RWPE1 (cell line): ENCODE measurements at regions of chr14 and their contacts with region 1.

Region 1: DNA sequence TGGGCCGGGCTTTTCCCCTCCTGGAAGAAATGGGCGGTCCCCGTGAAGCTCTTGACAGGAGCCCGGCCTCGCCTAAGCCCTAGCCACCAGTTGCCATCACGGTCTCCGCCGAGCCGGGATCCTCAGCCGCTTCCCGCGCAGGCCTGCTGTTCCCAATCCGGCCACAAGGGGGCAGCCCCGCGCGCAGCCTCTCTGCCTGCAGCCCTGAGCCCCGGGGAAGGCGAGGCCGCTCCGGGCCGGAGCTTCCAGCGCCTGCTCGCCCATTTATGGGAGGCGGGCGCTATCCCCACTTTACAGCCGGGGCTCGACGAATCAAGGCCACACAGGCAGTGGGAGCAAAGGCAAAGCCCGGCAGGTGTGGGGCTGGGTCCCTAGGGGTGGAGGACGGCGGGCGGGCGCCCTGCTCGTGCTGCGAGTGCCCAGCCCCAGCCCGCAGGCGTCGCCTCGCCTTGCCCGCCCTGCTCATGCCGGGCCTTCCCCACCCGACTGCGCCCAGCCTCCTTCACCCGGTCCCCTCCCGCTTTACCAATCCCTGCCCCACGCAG is 61.5 kb downstream of the LGMN start:
- DNase-seq: peak; percentile 84
- H3K27ac ChIP-seq: no peak overlapping the region
- CTCF ChIP-seq: peak; percentile 97

Region 2: GRCh38 chr14:92317511-92317910 is 369.5 kb before region 1 on chr14:
- CTCF ChIA-PET with region 1: no interaction called
- POLR2A ChIA-PET with region 1: no interaction called
- DNase-seq: no peak
- H3K27ac ChIP-seq: no peak overlapping the region
- CTCF ChIP-seq: no peak

Region 3: DNA sequence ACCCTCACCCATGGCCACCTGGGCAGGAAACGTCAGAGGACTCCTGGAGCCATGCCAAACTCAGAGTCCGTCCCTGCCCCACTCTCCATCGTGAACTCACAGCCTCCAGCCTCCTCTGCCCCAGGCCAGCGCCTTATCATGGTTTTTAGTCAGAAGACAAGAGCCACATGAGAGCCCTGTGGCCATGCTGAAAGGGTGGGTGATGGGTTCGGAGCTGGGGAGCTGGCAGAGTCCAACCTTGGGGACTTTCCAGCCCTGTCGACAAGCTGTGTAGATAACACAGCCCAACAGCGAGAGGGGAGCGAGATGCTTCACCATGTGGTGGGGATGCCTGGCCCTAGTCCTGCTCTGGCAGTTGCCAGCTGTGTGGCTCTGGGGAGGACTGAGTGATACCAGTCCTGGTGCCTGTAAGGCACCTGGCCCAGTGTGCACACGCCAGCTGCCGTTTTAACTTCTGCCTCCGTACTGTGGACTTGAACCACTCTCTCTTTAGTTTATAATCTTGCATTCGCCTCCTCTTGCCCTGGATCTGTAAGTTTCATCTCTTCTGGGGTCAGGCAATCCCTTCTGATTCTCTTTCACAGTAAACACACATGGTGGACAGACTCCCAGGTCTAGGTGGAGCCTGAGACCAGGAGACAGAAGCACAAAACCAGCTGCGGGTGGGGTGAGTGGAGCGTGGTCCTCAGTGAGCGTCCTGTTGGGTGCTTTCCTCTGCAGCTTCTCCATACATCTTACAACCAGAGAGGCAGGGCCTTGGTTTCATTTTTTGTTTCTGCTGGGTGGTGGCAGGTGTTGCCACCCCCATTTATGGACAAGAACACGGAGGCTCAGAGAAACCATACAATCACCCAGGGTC is 118.1 kb before region 1 on chr14:
- CTCF ChIA-PET with region 1: no interaction called
- POLR2A ChIA-PET with region 1: no interaction called
- DNase-seq: no peak
- H3K27ac ChIP-seq: no peak overlapping the region
- CTCF ChIP-seq: no peak

Region 4: DNA sequence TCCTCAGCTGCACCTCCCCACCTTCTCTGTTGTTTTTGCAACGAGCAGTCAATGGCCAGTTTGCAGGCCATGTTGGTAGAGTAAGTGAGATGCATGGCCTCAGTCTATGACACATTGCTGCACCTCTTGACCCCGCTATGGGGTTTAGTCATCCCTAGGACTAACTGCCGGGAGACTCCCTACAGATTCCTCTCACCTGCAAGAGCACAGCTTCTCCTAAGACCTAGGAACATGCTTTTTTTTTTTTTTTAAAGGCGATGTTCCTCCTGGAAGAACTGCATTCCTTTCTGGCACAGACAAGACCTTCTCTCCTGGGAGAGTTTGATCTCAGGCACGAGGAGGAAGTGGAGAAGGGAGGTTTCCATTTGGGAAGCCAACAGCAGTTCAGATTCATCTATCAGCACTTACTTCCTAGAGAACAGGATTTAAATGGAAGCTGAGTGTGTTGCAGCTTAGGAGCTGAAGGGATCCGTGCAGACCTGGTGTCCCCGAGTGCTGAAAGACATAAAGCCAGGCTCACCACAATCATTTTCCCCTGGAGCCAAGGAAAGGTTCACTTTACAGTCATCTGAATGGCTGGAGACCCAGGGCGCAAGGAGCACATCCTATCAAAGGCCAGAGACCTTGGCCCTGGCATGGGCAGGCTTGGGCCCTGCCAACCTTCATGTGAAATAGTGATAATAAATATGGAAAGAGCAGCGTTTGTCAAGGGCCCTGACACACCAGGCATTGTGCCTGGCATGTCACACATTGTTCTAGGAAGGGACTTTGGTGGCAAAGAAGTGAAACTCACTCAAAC is 42.6 kb before region 1 on chr14:
- CTCF ChIA-PET with region 1: interaction called, 10 read pairs
- POLR2A ChIA-PET with region 1: no interaction called
- DNase-seq: peak; percentile 94
- H3K27ac ChIP-seq: peak overlapping the region; percentile 38; the same call in 1 of the 2 replicates
- CTCF ChIP-seq: no peak

Region 5: GRCh38 chr14:92785667-92786426 is 98.9 kb after region 1 on chr14:
- CTCF ChIA-PET with region 1: interaction called, 10 read pairs
- POLR2A ChIA-PET with region 1: no interaction called
- DNase-seq: peak; percentile 54
- H3K27ac ChIP-seq: no peak overlapping the region
- CTCF ChIP-seq: no peak

Region 6: DNA sequence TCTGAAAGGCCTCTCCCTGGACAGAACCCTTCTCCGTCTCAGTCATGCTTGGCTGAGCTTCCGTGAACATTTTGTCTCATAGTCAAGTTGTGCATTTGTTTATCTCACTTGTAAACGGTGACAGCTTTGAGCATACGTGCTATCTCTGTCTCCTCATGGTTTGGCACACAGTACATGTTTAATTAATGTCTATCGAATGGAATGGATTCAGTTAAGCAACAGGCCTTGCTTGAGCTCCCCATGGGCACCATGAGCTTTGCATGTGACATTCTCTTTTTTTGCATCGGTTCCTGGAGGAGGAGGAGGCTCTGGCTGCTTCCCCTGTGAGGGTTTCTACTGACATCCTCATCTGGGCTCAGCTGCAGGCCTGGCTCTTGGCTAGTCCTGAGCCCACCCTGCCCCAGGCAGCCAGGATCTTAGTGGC is 1021.4 kb after region 1 on chr14:
- CTCF ChIA-PET with region 1: no interaction called
- POLR2A ChIA-PET with region 1: no interaction called
- DNase-seq: no peak
- H3K27ac ChIP-seq: no peak overlapping the region
- CTCF ChIP-seq: no peak